ENCODE measurements at regions of chr6 and their contacts with region 1.

Region 1: GRCh38 chr6:7559658-7560385 is 18.4 kb downstream of the DSP start:
- DNase-seq: no peak
- H3K4me3 ChIP-seq: no peak overlapping the region
- H3K27ac ChIP-seq: no peak overlapping the region
- H3K4me1 ChIP-seq: no peaks in the 10 kb centered on the region
- H3K27me3 ChIP-seq: no peaks in the 10 kb centered on the region
- CTCF ChIP-seq: no peak
- POLR2A ChIP-seq: no peak

Region 2: DNA sequence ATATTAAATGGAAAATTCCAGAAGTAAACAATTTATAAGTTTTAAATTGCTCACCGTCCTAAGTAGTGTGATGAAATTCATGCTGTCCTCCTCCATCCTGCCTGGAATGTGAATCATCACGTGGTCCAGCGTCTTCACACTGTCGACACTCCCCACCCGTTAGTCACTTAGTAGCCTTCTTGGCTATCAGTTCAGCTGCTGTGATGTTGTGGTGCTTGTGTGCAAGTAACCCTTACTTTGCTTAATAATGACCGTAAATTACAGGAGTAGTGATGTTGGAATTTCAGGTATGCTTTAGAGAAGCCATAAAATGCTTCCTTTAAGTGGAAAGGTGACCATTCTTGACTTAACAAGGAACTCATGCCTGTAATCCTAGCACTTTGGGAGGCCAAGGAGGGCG is 145.0 kb before region 1 on chr6:
- intact Hi-C with region 1: loop called in 1 of 2 experiments (anchors 10 kb)
- DNase-seq: no peak
- H3K4me3 ChIP-seq: no peak overlapping the region
- H3K27ac ChIP-seq: no peak overlapping the region
- H3K4me1 ChIP-seq: no peaks in the 10 kb centered on the region
- H3K27me3 ChIP-seq: no peaks in the 10 kb centered on the region
- CTCF ChIP-seq: no peak
- POLR2A ChIP-seq: no peak

Measured in adrenal gland (tissue), 19 donors.